Heart right ventricle (tissue), 16 donors: ENCODE measurements at regions of chr4 and their contacts with region 1.

Region 1: DNA sequence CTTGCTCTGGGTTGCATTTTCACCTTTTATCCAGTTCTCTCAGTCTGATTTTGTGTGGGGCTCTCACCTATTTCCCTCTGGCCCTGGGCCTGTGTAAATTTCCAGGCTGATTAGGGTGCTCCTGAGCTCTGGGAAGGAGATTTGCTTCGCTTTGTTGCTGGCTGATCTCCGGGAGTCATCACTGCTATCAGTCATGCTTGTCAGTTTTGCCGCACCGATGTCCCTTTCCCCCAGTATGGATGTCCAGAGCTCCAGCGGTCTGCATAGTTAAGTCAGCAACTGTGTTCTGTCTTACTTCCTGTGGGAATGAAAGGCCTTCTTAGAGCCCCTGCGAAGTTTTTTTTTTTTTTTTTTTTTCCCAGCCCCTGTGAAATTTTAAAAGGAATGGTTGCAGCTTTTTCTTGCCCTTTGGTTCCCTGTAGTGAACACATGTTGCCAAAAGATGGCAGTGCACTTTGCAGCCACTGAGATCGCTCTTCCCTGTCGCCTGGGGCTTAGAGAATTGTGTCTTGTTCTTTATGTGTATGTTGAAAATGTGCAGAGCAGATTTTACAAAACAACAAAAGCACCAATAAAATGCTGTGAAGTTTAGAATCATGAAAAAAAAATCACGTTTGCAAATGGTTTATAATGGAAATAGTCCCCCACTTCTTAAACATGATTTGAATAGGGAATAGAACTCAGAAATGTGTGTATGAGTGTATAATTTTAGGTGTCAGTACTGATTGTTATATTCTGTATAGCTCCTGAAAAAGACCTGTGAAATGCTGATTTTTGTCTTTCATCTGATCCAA is 109.1 kb upstream of the SLC4A4 start:
- DNase-seq: no peak
- ATAC-seq: peak in 5 of 8 donors; percentile 52 to 75 (median 60)
- H3K4me3 ChIP-seq: peak overlapping the region in 2 of 10 donors; percentile 26
- H3K27ac ChIP-seq: peak overlapping the region in 7 of 10 donors; percentile 66 to 82 (median 76)
- H3K4me1 ChIP-seq: peaks cover 0 to 45% (median 27%) of the 10 kb centered on the region in 9 donors
- H3K27me3 ChIP-seq: no peaks in the 10 kb centered on the region
- CTCF ChIP-seq: peak; percentile 40 to 82 (median 70)

Region 2: GRCh38 chr4:71184195-71184781 is 45.4 kb before region 1 on chr4:
- intact Hi-C with region 1: loop called in 3 of 10 experiments (anchors 5 to 10 kb)
- DNase-seq: peak in 1 of 2 donors; percentile 25
- ATAC-seq: no peak
- H3K4me3 ChIP-seq: no peak overlapping the region
- H3K27ac ChIP-seq: no peak overlapping the region
- H3K4me1 ChIP-seq: peaks cover 0 to 30% (median 16%) of the 10 kb centered on the region in 9 donors
- H3K27me3 ChIP-seq: peaks cover 0 to 48% (median 11%) of the 10 kb centered on the region in 7 donors
- CTCF ChIP-seq: peak; percentile 12 to 79 (median 67)

Region 3: DNA sequence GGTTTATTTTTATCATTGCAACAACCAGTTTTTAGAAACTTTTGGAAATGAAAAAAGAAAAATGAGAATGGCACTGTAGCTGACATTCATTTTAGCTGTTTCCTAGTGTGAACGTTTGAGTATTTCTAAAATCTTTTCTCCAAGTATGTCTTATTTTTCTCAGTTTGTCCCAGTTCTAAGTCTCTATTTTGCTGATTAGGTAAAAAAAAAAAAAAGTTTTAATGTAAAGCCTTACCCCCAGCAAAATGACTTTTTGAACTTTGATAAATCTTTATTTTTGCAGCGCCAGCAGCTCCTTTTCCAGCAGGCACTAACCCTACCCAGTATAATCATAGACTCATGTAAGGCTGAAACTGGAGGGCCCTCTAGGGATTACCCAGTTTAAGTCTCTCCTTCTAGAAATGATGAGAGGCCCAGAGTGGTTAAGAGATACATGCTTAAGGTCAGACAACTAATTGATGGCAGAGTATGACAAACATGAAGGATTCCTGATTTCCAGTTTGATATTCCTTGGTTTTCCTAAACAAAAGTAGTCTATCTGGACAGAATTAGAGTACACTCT is 24.9 kb after region 1 on chr4:
- intact Hi-C with region 1: loop called in 1 of 10 experiments (anchors 2 kb)
- DNase-seq: no peak
- ATAC-seq: peak in 4 of 8 donors; percentile 49 to 68 (median 62)
- H3K4me3 ChIP-seq: peak overlapping the region in 1 of 10 donors; percentile 4
- H3K27ac ChIP-seq: peak overlapping the region in 2 of 10 donors; percentile 28 to 41
- H3K4me1 ChIP-seq: peaks cover 0 to 72% (median 24%) of the 10 kb centered on the region in 9 donors
- H3K27me3 ChIP-seq: no peaks in the 10 kb centered on the region
- CTCF ChIP-seq: peak in 3 of 9 donors; percentile 25 to 32 (median 30)

Region 4: DNA sequence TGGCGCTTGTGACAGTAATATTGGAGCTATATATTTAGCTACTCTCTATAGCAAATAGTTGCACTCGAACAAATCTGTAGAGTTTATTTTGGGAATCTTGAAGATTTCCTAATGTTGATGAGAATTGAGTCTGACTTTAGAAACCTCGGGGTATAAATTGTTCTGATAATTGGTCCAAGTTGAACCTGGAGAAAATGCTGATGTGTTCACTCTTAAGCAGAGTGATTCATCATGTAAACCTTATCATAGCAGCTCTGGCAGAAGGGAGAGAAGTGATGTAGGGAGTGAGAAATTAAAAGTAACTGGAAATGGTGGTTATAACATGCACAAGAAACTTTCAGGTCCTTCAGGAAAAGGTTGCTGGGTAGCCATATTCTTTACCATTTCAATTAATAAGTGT is 92.8 kb after region 1 on chr4:
- intact Hi-C with region 1: no loop called
- DNase-seq: no peak
- ATAC-seq: peak in 1 of 8 donors; percentile 67
- H3K4me3 ChIP-seq: no peak overlapping the region
- H3K27ac ChIP-seq: no peak overlapping the region
- H3K4me1 ChIP-seq: peaks cover 0 to 8% (median 0%) of the 10 kb centered on the region in 9 donors
- H3K27me3 ChIP-seq: no peaks in the 10 kb centered on the region
- CTCF ChIP-seq: no peak

Region 5: DNA sequence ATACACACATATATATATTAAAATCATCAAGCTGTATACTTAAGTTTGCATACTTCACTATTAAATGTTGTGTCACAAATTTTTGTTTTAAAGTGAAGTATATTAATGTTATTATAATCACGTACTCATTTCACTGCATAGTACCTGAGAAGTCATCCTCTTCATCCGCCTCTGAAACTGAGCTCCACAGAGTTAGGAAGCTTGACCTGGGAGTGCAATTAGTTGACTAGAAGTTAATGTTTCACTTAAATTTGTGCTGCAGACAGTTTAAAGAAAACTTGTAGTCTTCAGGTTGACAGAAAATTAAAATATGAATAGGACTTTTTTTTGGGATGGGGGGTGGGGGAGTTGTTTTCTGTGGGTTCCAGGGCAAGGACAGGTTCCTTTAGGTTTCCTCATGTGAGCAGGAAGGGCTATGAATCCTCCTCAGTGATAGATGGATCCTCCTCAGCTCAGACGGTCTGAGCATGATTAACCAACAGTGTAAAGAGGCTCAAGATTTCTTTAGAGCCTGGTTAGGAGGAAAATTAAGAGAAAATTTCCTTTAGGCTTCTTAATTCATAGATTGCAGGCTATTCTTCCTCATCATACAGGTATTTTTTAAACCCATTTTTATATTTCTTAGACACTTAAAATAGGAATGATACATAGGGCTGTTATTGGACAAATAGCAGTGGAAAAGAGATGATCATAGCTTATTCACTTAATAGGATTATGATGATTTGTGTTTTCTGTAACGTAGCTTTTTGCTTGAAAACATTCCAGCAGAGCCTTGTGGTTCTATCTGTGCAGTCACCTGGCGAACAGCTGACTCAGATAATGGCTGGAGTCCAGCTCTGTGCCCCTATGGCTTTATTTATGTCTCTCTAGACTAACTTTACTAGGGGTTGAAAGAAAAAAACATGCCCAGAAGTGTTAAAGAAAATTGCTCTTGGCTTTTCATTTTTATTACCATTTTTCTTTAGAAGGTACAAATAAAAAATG is 211.8 kb after region 1 on chr4:
- intact Hi-C with region 1: loop called in 1 of 10 experiments (anchors 10 kb)
- DNase-seq: no peak
- ATAC-seq: peak in 1 of 8 donors; percentile 46
- H3K4me3 ChIP-seq: no peak overlapping the region
- H3K27ac ChIP-seq: no peak overlapping the region
- H3K4me1 ChIP-seq: peaks cover 0 to 12% (median 0%) of the 10 kb centered on the region in 9 donors
- H3K27me3 ChIP-seq: no peaks in the 10 kb centered on the region
- CTCF ChIP-seq: no peak

Region 6: GRCh38 chr4:71540749-71541269 is 311.1 kb after region 1 on chr4:
- intact Hi-C with region 1: loop called in 2 of 10 experiments (anchors 5 to 10 kb)
- DNase-seq: no peak
- ATAC-seq: no peak
- H3K4me3 ChIP-seq: no peak overlapping the region
- H3K27ac ChIP-seq: no peak overlapping the region
- H3K4me1 ChIP-seq: peaks cover 0 to 20% (median 5%) of the 10 kb centered on the region in 9 donors
- H3K27me3 ChIP-seq: no peaks in the 10 kb centered on the region
- CTCF ChIP-seq: no peak

Region 7: DNA sequence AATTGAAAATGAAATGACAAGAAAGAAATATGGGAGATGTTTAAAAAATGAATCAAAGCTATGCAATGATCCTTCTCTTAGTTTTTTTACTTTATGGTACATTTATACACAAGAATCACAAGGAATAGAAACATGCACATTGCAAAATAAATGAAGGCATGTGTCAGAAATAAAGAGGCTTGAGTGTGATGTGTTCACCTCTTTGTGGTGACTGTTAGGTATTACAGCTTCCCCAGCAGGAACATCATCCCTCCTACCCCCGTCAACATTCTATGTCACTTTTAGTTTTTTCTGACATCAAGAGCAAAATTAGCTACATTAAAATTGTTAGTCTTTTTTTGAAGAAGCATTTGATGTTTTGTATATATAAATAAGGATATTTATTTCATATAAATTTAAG is 323.9 kb after region 1 on chr4:
- intact Hi-C with region 1: loop called in 6 of 10 experiments (anchors 2 to 10 kb)
- DNase-seq: no peak
- ATAC-seq: peak in 4 of 8 donors; percentile 70 to 82 (median 76)
- H3K4me3 ChIP-seq: no peak overlapping the region
- H3K27ac ChIP-seq: no peak overlapping the region
- H3K4me1 ChIP-seq: no peaks in the 10 kb centered on the region
- H3K27me3 ChIP-seq: no peaks in the 10 kb centered on the region
- CTCF ChIP-seq: peak in 7 of 9 donors; percentile 48 to 65 (median 59)

Region 8: GRCh38 chr4:71713611-71714203 is 484.0 kb after region 1 on chr4:
- intact Hi-C with region 1: loop called in 3 of 10 experiments (anchors 5 to 10 kb)
- DNase-seq: peak in 1 of 2 donors; percentile 5
- ATAC-seq: no peak
- H3K4me3 ChIP-seq: no peak overlapping the region
- H3K27ac ChIP-seq: no peak overlapping the region
- H3K4me1 ChIP-seq: no peaks in the 10 kb centered on the region
- H3K27me3 ChIP-seq: no peaks in the 10 kb centered on the region
- CTCF ChIP-seq: peak; percentile 16 to 70 (median 56)